GM13976 (cell line): ENCODE measurements at regions of chrX and their contacts with region 1.

Region 1: DNA sequence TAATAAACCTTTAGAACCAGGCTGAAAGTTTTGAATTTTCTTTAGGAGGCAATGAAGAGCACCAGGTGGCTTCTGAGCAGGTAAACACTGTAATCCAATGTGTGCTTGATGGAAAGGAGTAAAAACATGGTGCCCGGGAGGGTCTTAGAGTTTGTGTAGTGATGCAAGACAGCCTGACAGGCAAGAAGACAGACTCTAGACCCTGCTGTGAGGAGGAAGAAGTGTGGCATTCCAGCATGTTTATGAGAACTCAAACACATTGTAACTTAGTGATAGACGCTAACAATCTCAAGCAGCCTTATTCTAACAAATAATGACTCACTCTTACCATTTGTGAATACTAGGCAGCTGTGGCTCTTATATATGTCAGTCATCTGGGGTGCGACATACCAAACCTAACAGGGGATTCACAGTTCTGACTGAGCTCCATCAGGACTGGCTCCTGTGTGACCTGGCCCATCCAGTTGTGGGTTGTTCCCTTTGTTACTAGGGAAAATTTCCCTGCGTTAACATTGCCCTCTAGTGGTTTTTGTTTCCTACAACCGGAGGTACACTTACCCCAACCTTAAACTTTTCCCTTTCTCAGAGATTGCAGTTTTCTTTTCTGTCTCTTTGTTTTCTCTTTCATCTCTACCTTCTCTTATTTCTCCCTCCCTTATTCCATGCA is 53.8 kb downstream of the VSIG4 start:
- DNase-seq: no peak
- CTCF ChIP-seq: peak; percentile 19

Region 2: GRCh38 chrX:65581661-65582339 is 404.3 kb before region 1 on chrX:
- in situ Hi-C with region 1: loop called (anchors 10 kb)
- DNase-seq: peak; percentile 57
- CTCF ChIP-seq: peak; percentile 79

Region 3: DNA sequence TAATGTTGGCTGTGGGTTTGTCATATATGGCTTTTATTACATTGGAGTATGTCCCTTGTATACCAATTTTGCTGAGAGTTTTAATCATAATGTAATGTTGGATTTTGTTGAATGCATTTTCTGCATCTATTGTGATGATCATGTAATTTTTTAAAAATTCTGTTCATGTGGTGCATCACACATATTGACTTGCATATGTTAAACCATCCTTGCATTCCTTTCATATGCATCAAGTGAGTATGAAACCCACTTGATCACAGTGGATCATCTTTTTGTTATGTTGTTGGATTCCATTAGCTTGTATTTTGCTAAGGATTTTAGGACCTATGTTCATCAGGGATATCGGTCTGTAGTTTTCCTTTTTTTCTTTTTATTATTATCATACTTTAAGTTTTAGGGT is 190.1 kb after region 1 on chrX:
- in situ Hi-C with region 1: no loop called
- DNase-seq: no peak
- CTCF ChIP-seq: no peak

Region 4: DNA sequence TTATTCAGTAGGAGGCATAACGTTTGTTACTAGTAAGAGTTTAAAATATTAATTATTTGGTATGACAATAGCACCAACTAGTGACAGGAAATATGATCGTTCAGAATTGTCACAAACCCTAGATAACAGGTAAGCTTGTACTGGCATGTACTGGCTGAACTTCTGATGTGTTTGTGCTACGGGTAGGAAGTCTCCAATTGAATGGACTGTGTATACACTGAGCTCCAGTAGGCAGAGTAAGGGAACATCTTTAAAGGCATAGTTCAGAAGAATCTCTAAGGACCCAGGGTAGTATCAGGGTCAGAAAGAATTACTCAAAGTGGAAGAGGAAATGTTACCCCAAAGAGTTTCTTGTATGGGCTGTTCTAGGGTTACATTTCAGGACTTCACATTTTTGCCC is 422.5 kb after region 1 on chrX:
- in situ Hi-C with region 1: loop called (anchors 25 kb)
- DNase-seq: peak; percentile 8
- CTCF ChIP-seq: peak; percentile 26